Mammary epithelial cell (primary cell): ENCODE measurements at regions of chr7 and their contacts with region 1.

Region 1: DNA sequence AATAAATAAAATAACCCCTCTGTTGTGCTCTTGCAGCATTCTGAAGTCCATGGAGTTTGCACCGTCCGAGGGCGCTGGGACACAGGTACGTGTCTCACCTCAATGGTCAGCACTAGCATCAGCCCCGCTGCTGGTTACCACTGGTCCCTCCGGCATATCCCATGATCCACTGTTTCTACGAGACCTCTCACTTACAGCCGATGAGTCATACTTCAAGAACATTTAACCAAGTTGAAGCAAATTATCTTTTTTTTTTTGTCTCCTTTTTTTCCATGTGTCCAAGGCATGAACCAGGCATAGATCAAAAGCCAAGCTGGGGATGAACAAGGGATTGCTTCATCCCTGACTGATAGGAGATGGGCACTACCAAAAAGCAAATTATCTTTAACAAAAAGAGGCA is 92.9 kb upstream of the SH2B2 start:
- DNase-seq: no peak
- H3K4me3 ChIP-seq: no peak overlapping the region
- H3K27ac ChIP-seq: no peak overlapping the region
- H3K4me1 ChIP-seq: no peaks in the 10 kb centered on the region
- H3K27me3 ChIP-seq: no peaks in the 10 kb centered on the region
- CTCF ChIP-seq: no peak

Region 2: DNA sequence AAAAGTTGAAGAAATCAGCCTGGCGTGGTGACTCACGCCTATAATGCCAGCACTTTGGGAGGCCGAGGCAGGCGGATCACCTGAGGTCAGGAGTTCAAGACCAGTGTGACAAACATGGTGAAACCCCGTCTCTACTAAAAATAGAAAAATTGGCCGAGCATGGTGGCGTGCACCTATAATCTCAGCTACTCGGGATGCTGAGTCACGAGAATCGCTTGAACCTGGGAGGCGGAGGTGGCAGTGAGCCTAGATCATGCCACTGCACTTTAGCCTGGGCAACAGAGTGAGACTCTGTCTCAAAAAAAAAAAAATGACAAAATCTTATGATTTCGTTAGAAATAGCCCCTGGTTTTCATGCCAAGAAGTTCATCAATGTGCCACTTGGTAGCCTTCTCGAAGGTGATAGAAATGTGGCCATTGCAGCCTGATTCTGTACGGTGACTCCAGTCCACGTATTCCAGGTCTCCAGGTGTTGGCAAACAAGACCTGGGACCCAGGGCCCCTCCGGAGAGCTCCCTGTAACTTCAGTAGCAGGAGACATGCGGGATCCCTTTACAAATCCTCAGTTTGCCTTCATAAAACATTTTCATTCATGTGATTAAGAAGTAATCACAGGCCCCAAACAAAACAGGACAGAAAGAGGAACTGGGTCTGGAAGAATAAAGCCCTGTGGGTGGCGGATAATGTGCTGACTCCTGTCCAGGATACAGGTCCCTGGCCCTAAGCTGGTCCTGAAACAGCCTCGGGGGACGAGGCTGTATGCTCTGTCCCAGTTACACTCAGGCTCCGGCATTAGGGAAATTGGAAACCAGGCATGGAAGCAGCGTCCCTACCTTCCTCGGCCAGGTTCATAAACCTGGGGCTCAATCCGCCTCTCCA is 114.4 kb before region 1 on chr7:
- CTCF ChIA-PET with region 1: no interaction called
- dilution Hi-C with region 1: no loop called
- in situ Hi-C with region 1: no loop called
- intact Hi-C with region 1: no loop called
- DNase-seq: no peak
- H3K4me3 ChIP-seq: no peak overlapping the region
- H3K27ac ChIP-seq: no peak overlapping the region
- H3K4me1 ChIP-seq: no peaks in the 10 kb centered on the region
- H3K27me3 ChIP-seq: no peaks in the 10 kb centered on the region
- CTCF ChIP-seq: no peak

Region 3: GRCh38 chr7:102125127-102125561 is 68.7 kb before region 1 on chr7:
- CTCF ChIA-PET with region 1: no interaction called
- dilution Hi-C with region 1: loop called (anchors 5 kb)
- in situ Hi-C with region 1: no loop called
- intact Hi-C with region 1: no loop called
- DNase-seq: no peak
- H3K4me3 ChIP-seq: no peak overlapping the region
- H3K27ac ChIP-seq: no peak overlapping the region
- H3K4me1 ChIP-seq: peaks cover 10% of the 10 kb centered on the region
- H3K27me3 ChIP-seq: no peaks in the 10 kb centered on the region
- CTCF ChIP-seq: no peak